ENCODE measurements at regions of chr16 and their contacts with region 1.

Region 1: DNA sequence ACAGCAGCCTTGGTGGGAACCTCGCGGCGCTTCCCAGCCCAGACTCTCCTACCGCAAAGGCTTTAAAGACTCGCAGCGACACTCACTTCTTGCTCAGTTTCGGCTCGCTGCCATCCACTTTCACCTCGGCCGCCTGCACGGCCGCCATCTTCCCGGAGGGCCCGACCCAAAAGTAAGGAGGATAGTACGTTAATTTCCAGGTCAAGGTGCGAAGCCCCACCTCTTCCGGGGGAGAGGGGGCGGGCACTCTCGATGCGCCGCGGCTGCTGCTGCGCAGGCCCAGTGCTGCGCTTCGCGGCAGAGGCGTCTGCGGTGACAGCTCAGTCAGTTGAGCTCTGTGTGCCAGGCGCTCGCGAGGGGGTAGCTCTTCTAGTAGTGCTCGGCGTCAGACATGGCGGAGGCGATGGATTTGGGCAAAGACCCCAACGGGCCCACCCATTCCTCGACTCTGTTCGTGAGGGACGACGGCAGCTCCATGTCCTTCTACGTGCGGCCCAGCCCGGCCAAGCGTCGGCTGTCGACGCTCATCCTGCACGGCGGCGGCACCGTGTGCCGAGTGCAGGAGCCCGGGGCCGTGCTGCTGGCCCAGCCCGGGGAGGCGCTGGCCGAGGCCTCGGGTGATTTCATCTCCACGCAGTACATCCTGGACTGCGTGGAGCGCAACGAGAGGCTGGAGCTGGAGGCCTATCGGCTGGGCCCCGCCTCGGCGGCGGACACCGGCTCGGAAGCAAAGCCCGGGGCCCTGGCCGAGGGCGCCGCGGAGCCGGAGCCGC is at the starts of genes KARS1 and TERF2IP:
- DNase-seq: peak; percentile 92
- H3K4me3 Mint-ChIP-seq: peak within 1 kb of the TSS; percentile 76
- H3K27ac Mint-ChIP-seq: peak within 1 kb of the TSS; percentile 98
- H3K4me1 Mint-ChIP-seq: peaks cover 33% of the 10 kb centered on the region
- H3K27me3 Mint-ChIP-seq: no peaks in the 10 kb centered on the region
- CTCF ChIP-seq: no peak
- total RNA-seq, gene KARS1: 213 and 219 TPM in 2 replicates
- total RNA-seq, gene TERF2IP: 73.9 and 80.0 TPM in 2 replicates

Region 2: DNA sequence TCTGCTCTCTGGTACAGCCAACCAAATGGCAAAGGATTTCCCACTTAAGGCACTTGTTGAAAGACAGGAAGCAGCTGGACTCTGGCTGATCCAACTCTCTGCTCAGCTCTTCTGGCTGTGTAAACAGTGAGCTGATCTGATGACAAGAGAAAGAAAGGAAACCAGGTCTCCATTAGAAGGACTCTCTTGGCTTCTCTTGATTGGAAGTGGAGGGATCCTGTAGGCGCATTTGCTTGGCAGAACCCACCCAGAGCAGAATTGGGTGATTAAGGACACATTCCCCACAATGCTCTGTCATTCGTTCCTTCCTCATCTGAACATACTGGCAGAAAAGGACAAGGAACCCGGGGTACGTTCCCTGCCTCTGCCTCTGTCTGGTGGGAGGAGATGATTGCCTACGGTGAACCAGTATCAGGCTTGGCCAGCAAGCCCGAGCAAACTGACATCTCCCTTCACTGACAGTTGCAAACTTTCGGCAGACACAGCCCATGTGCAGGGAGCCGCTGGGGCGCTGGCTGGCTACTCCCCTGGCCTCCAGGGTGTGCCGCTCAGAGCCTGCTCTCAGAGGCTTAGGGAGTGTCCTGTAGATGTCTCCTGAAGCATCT is 560.2 kb before region 1 on chr16:
- CTCF ChIA-PET with region 1: no interaction called
- POLR2A ChIA-PET with region 1: no interaction called
- intact Hi-C with region 1: no loop called
- DNase-seq: peak; percentile 7
- H3K4me3 Mint-ChIP-seq: no peak overlapping the region
- H3K27ac Mint-ChIP-seq: peak overlapping the region; percentile 51
- H3K4me1 Mint-ChIP-seq: peaks cover 6% of the 10 kb centered on the region
- H3K27me3 Mint-ChIP-seq: no peaks in the 10 kb centered on the region
- CTCF ChIP-seq: no peak

Region 3: GRCh38 chr16:75555707-75556430 is 91.8 kb before region 1 on chr16 and contains the start of gene TMEM231:
- CTCF ChIA-PET with region 1: interaction called, 3 read pairs
- POLR2A ChIA-PET with region 1: interaction called, 37 read pairs
- intact Hi-C with region 1: no loop called
- DNase-seq: peak; percentile 94
- H3K4me3 Mint-ChIP-seq: peak within 1 kb of the TSS; percentile 85
- H3K27ac Mint-ChIP-seq: peak within 1 kb of the TSS; percentile 91
- H3K4me1 Mint-ChIP-seq: peaks cover 6% of the 10 kb centered on the region
- H3K27me3 Mint-ChIP-seq: no peaks in the 10 kb centered on the region
- CTCF ChIP-seq: no peak
- total RNA-seq, gene TMEM231: 18.6 and 21.1 TPM in 2 replicates

Region 4: DNA sequence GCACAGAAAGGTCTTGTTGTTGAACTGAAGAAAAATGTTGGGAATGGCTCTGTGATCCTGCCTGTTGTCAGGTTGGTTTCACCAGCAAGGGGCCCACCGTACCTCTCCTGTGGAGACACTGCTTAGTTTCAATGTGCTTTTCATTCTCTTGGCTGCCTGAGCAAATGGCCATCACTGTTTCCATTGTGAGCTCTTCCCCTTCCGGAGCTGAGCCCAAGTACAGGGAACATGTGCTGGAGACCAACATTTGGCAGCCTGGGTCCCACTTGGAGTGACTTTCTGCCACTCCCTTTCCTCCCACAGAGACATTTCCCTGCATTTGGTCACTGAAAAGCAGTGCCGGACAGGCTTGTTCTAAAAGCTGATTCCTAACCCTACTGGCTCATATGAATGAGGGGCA is 58.4 kb before region 1 on chr16:
- CTCF ChIA-PET with region 1: no interaction called
- POLR2A ChIA-PET with region 1: no interaction called
- intact Hi-C with region 1: no loop called
- DNase-seq: no peak
- H3K4me3 Mint-ChIP-seq: no peak overlapping the region
- H3K27ac Mint-ChIP-seq: no peak overlapping the region
- H3K4me1 Mint-ChIP-seq: peaks cover 4% of the 10 kb centered on the region
- H3K27me3 Mint-ChIP-seq: no peaks in the 10 kb centered on the region
- CTCF ChIP-seq: no peak

Region 5: DNA sequence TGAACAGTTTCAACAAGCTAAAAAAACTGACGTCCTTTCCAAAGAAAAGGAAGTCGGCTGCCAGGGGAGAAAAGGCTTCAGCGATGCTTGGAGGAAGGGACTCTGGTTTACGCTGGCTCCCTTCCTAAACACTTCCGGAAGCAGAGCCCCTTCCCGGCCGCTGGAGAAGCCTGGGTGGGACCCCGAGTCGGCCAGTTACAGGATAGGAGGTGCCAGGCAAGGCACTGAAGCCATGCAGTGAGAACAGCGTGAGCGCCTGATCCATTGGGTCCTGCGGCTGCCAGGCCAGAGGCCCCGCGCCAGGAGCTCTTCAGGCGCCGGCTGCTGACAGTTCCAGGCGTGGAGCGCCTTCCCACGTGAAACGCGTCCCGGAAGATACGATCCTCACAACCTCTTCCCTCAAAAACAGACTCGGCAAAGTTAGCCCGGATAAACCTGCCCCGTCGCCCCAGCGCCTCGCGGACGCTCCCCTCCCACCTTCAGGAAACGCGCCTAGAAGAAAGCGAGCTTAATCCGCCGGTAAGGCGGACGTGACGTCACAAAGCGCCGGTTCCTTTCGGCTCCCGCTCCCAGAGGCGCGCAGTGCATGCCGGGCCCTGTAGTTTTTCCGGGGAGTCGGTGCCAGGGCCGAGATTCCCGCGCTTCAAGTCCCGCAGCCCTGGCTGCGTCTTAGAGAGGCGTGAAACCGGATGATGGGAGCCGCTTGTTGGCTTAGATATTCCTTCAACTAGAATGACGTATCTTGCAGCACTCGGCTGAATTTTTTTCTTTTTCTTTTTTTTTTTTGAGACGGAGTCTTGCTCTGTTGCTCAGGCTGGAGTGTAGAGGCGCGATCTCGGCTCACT is 24.7 kb before region 1 on chr16 and contains the start of gene ADAT1:
- CTCF ChIA-PET with region 1: interaction called, 4 read pairs
- POLR2A ChIA-PET with region 1: interaction called, 76 read pairs
- intact Hi-C with region 1: no loop called
- DNase-seq: peak; percentile 98
- H3K4me3 Mint-ChIP-seq: peak within 1 kb of the TSS; percentile 84
- H3K27ac Mint-ChIP-seq: peak within 1 kb of the TSS; percentile 72
- H3K4me1 Mint-ChIP-seq: peaks cover 25% of the 10 kb centered on the region
- H3K27me3 Mint-ChIP-seq: no peaks in the 10 kb centered on the region
- CTCF ChIP-seq: no peak
- total RNA-seq, gene ADAT1: 48.7 and 60.2 TPM in 2 replicates

Region 6: GRCh38 chr16:75660726-75661302 is 13.1 kb after region 1 on chr16:
- CTCF ChIA-PET with region 1: no interaction called
- POLR2A ChIA-PET with region 1: interaction called, 16 read pairs
- intact Hi-C with region 1: no loop called
- DNase-seq: no peak
- H3K4me3 Mint-ChIP-seq: no peak overlapping the region
- H3K27ac Mint-ChIP-seq: no peak overlapping the region
- H3K4me1 Mint-ChIP-seq: peaks cover 8% of the 10 kb centered on the region
- H3K27me3 Mint-ChIP-seq: no peaks in the 10 kb centered on the region
- CTCF ChIP-seq: no peak

Region 7: DNA sequence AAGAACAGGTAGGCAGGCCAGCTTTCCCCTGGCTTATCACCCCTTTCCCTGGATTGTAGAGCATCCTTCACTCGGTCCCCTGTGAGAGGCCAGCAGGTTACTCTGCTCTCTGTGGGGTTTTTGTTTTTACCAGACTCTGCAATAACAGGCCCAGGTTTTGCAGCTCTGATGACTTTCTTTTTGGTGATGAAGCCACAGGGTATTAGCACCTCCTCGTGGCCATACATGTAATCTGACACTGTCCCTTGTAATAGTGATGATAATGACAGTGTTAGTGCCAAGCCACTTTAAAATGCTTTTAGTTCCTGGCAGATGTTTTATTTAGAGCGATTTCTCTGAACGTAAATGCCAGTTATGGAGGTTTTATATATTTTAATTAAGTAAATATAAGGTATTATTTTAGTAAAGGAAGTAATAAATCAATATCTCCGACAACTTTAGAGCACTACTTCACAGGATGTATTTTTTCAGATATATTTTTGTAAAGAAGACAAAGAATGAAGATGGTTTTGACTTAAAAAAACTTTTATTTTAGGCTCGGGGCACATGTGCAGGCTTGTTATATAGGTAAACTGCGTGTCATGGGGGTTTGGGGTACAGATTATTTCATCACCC is 116.6 kb after region 1 on chr16:
- CTCF ChIA-PET with region 1: interaction called, 67 read pairs
- POLR2A ChIA-PET with region 1: interaction called, 11 read pairs
- intact Hi-C with region 1: loop called (anchors 1 kb)
- DNase-seq: peak; percentile 75
- H3K4me3 Mint-ChIP-seq: no peak overlapping the region
- H3K27ac Mint-ChIP-seq: no peak overlapping the region
- H3K4me1 Mint-ChIP-seq: peaks cover 5% of the 10 kb centered on the region
- H3K27me3 Mint-ChIP-seq: peaks cover 13% of the 10 kb centered on the region
- CTCF ChIP-seq: peak; percentile 67

Measured in MCF 10A (cell line).